Calu3 (cell line): ENCODE measurements at regions of chr1 and their contacts with region 1.

Region 1: GRCh38 chr1:32964461-32965250 is at the start of gene RNF19B:
- DNase-seq: peak; percentile 97
- H3K4me3 Mint-ChIP-seq: peak within 1 kb of the TSS; percentile 84
- H3K27ac Mint-ChIP-seq: peak within 1 kb of the TSS; percentile 70
- H3K4me1 Mint-ChIP-seq: peaks cover 21% of the 10 kb centered on the region
- H3K27me3 Mint-ChIP-seq: no peaks in the 10 kb centered on the region
- CTCF ChIP-seq: no peak
- total RNA-seq, gene RNF19B: 21.5 and 23.2 TPM in 2 replicates

Region 2: DNA sequence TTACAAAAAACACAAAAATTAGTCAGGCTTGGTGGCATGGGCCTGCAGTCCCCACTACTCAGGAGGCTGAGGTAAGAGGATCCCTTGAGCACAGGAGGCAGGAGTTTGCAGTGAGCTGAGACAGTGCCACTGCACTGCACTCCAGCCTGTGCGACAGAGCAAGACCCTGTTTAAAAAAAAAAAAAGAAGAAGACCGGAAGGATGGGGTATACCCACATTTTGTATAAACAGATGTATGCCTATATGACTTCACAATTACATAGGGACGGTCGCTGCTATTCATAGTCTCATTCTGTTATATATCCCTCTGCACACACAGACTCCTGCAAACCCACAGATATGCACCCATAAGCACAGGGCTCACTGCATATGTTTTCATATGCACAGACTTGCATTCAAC is 700.9 kb before region 1 on chr1:
- CTCF ChIA-PET with region 1: no interaction called
- intact Hi-C with region 1: no loop called
- DNase-seq: no peak
- H3K4me3 Mint-ChIP-seq: no peak overlapping the region
- H3K27ac Mint-ChIP-seq: no peak overlapping the region
- H3K4me1 Mint-ChIP-seq: peaks cover 17% of the 10 kb centered on the region
- H3K27me3 Mint-ChIP-seq: no peaks in the 10 kb centered on the region
- CTCF ChIP-seq: no peak

Region 3: DNA sequence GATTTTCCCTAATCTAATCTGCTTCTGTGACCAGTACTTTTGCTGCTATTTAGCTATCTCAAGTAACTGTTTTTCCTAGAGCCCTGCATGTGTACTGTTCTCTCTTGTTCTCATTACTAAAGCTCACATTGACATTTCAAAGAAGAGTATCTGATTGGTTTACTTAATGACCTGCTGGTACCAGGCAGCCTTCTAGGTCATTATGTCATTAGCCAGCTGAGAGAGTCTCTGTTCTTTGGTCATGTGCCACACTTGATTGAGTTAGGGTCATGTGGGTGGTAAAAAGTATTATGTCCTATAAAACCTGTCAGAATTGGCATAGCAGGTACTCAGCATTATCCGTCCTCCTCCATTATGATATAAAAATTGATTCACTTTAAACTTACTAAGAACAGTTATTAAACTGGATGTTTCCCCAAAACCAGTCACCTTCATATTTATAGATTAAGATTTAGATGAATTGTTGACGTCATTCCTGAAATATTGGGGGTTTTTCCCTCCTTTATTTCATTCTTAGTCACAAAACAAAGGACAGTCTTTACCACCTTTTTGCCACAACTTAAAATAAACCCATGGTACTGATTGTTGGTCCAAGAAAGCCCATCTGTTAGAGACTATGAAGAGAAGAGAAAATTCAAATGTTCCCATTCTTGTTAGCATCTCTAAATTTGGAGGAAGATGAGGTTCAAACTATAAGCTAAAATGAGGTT is 116.1 kb before region 1 on chr1:
- CTCF ChIA-PET with region 1: no interaction called
- intact Hi-C with region 1: no loop called
- DNase-seq: no peak
- H3K4me3 Mint-ChIP-seq: no peak overlapping the region
- H3K27ac Mint-ChIP-seq: no peak overlapping the region
- H3K4me1 Mint-ChIP-seq: no peaks in the 10 kb centered on the region
- H3K27me3 Mint-ChIP-seq: no peaks in the 10 kb centered on the region
- CTCF ChIP-seq: no peak

Region 4: GRCh38 chr1:32953495-32953894 is 11.2 kb before region 1 on chr1:
- CTCF ChIA-PET with region 1: interaction called, 12 read pairs
- intact Hi-C with region 1: no loop called
- DNase-seq: no peak
- H3K4me3 Mint-ChIP-seq: no peak overlapping the region
- H3K27ac Mint-ChIP-seq: peak overlapping the region; percentile 91
- H3K4me1 Mint-ChIP-seq: peaks cover 38% of the 10 kb centered on the region
- H3K27me3 Mint-ChIP-seq: no peaks in the 10 kb centered on the region
- CTCF ChIP-seq: no peak